Transverse colon (tissue), 4 donors: ENCODE measurements at regions of chr15 and their contacts with region 1.

Region 1: GRCh38 chr15:61890106-61890505 is 170.1 kb downstream of the VPS13C start:
- DNase-seq: no peak
- H3K4me3 ChIP-seq: no peak overlapping the region
- H3K27ac ChIP-seq: no peak overlapping the region
- H3K4me1 ChIP-seq: no peaks in the 10 kb centered on the region
- H3K27me3 ChIP-seq: no peaks in the 10 kb centered on the region
- CTCF ChIP-seq: no peak
- EP300 ChIP-seq: no peak
- POLR2A ChIP-seq: no peak

Region 2: GRCh38 chr15:61720197-61720596 is 169.9 kb before region 1 on chr15:
- in situ Hi-C with region 1: no loop called
- intact Hi-C with region 1: no loop called
- DNase-seq: no peak
- H3K4me3 ChIP-seq: no peak overlapping the region
- H3K27ac ChIP-seq: no peak overlapping the region
- H3K4me1 ChIP-seq: no peaks in the 10 kb centered on the region
- H3K27me3 ChIP-seq: no peaks in the 10 kb centered on the region
- CTCF ChIP-seq: no peak
- EP300 ChIP-seq: no peak
- POLR2A ChIP-seq: no peak

Region 3: GRCh38 chr15:61871926-61872522 is 18.1 kb before region 1 on chr15:
- in situ Hi-C with region 1: no loop called
- intact Hi-C with region 1: no loop called
- DNase-seq: no peak
- H3K4me3 ChIP-seq: no peak overlapping the region
- H3K27ac ChIP-seq: no peak overlapping the region
- H3K4me1 ChIP-seq: no peaks in the 10 kb centered on the region
- H3K27me3 ChIP-seq: no peaks in the 10 kb centered on the region
- CTCF ChIP-seq: peak; percentile 26 to 50 (median 45)
- EP300 ChIP-seq: no peak
- POLR2A ChIP-seq: no peak

Region 4: GRCh38 chr15:62026487-62027262 is 136.6 kb after region 1 on chr15:
- in situ Hi-C with region 1: no loop called
- intact Hi-C with region 1: no loop called
- DNase-seq: no peak
- H3K4me3 ChIP-seq: no peak overlapping the region
- H3K27ac ChIP-seq: no peak overlapping the region
- H3K4me1 ChIP-seq: no peaks in the 10 kb centered on the region
- H3K27me3 ChIP-seq: no peaks in the 10 kb centered on the region
- CTCF ChIP-seq: no peak
- EP300 ChIP-seq: no peak
- POLR2A ChIP-seq: no peak

Region 5: GRCh38 chr15:62691008-62691407 is 800.9 kb after region 1 on chr15:
- in situ Hi-C with region 1: no loop called
- intact Hi-C with region 1: loop called (anchors 5 kb)
- DNase-seq: no peak
- H3K4me3 ChIP-seq: no peak overlapping the region
- H3K27ac ChIP-seq: no peak overlapping the region
- H3K4me1 ChIP-seq: no peaks in the 10 kb centered on the region
- H3K27me3 ChIP-seq: no peaks in the 10 kb centered on the region
- CTCF ChIP-seq: no peak
- EP300 ChIP-seq: no peak
- POLR2A ChIP-seq: no peak

Region 6: GRCh38 chr15:62958528-62959363 is 1068.6 kb after region 1 on chr15:
- in situ Hi-C with region 1: no loop called
- intact Hi-C with region 1: no loop called
- DNase-seq: no peak
- H3K4me3 ChIP-seq: no peak overlapping the region
- H3K27ac ChIP-seq: no peak overlapping the region
- H3K4me1 ChIP-seq: peaks cover 0 to 6% (median 2%) of the 10 kb centered on the region in 4 donors
- H3K27me3 ChIP-seq: no peaks in the 10 kb centered on the region
- CTCF ChIP-seq: no peak
- EP300 ChIP-seq: no peak
- POLR2A ChIP-seq: no peak